ENCODE measurements at regions of chr10 and their contacts with region 1.

Region 1: GRCh38 chr10:114694752-114695151 is 36.7 kb upstream of the ABLIM1 start:
- DNase-seq: peak; percentile 58
- CTCF ChIP-seq: peak; percentile 44

Region 2: GRCh38 chr10:114026189-114027040 is 668.3 kb before region 1 on chr10:
- in situ Hi-C with region 1: no loop called
- DNase-seq: no peak
- CTCF ChIP-seq: no peak

Region 3: DNA sequence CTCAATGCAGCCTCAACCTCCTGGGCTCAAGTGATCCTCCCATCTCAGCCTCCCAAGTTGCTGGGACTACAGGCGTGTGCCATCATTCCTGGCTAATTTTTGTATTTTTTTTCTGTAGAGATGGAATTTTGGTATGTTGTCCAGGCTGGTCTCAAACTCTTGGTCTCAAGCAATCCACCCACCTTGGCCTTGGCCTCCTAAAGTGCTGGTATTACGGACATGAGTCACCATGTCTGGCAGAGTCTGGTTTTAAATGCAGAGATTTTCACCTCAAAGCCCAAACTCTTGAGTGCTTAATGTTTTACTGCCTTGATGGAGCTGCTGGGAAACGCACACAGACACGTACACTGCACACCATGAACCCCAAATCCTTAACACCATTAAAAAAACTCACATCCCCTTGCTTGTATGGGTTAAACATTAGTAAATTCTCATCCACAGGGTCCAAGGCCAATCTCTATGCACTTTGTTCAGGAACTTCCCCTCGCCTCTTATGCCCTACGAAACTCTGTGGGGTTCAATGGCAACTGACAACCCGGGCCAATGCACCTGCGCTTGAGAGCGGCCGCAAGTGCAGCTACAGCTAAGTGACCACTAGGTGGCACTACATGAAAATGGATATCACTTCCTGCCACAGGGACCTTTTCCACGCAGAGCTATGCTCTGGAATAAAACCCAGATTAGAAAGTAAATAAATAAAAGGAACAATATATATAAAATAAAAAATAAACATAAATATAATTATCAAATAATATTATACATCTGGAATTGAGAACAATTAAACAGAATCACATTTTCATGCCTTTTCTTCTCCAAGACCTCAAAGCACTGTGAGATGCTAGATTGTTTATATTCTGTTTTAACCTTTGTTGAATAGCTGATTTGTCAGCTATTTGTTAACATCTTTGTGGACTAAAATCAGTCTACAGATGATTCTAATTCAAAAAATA is 223.5 kb before region 1 on chr10:
- in situ Hi-C with region 1: loop called (anchors 10 kb)
- DNase-seq: peak; percentile 74
- CTCF ChIP-seq: peak; percentile 85

Region 4: GRCh38 chr10:114810926-114811325 is 116.2 kb after region 1 on chr10:
- in situ Hi-C with region 1: no loop called
- DNase-seq: peak; percentile 83
- CTCF ChIP-seq: no peak

Region 5: GRCh38 chr10:114869520-114869892 is 174.8 kb after region 1 on chr10:
- in situ Hi-C with region 1: no loop called
- DNase-seq: no peak
- CTCF ChIP-seq: no peak